Natural killer cell (primary cell): ENCODE measurements at regions of chr9 and their contacts with region 1.

Region 1: DNA sequence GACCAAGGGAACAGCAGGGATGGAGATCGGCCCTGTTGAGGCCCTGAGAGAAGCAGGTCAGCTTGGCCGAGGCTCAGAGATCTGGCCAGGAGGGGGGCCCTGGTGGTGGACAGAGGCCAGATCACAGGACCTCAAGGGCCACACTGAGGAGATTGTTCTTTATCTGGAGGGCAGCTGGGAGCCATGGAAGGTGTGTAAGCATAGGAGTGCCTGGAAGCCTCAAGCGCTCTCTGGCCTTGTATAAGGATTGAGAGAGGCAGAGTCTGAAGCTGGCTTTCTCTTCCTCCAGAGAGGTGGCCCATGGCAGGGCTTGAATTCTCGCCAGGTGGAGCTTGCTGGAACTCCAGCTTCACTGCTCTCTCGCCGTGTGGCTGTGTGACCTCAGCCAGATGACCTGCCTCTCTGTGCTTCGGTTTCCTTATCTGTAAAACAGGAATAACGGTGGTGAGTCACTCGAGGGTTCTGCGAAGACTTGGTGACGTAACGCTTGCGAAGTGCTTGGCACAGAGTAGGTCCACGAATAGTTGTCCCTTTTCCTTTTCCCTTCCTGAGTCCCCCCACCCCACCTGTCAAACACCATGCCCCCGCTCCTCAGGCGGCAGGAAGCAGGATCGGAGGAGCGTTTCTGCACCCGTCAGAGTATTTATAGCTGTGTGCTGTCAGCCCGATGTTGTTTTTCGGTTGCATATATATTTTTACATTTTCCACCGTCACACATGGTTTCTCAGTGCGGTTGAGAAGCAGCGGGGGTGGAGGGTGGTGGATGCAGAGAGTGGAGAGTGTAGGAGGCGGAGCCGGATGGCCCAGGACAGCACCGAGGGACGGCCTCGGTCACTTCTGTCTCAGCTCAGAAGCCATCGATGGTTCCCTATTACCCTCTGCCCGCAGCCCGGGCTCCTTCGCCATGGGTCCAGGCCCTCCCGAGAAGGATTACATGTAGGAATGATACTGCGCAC is 17.0 kb upstream of the CRB2 start:
- DNase-seq: peak; percentile 63 to 65
- ATAC-seq: peak; percentile 82 to 89 (median 85)
- H3K4me3 ChIP-seq: peak overlapping the region; percentile 29
- H3K4me3 Mint-ChIP-seq: peak overlapping the region; percentile 86
- H3K27ac ChIP-seq: peak overlapping the region; percentile 79
- H3K27ac Mint-ChIP-seq: peak overlapping the region; percentile 68 to 92
- H3K4me1 ChIP-seq: peaks cover 49% of the 10 kb centered on the region
- H3K4me1 Mint-ChIP-seq: peaks cover 27 to 30% of the 10 kb centered on the region in 2 donors
- H3K27me3 ChIP-seq: no peaks in the 10 kb centered on the region
- H3K27me3 Mint-ChIP-seq: peaks cover 6 to 13% of the 10 kb centered on the region in 2 donors
- CTCF ChIP-seq: no peak

Region 2: DNA sequence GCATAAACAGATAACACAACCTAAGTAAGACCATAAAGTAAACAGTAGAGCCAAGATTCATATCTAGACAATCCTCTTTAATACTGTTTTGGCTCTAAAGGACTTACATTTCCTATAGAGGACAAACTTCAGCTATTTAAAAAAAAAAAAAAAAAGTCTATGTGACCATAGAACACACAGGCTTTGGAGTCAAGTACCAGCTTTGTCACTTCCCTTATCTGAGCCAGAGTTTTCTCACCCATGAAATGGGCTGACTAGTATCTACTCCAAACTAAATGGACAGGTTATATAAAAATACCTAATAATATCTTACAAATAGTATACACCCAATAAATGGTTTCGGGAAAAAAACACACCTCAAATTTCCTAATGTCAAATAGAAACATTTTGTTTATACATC is 151.9 kb before region 1 on chr9:
- intact Hi-C with region 1: no loop called
- DNase-seq: no peak
- ATAC-seq: no peak
- H3K4me3 ChIP-seq: no peak overlapping the region
- H3K4me3 Mint-ChIP-seq: no peak overlapping the region
- H3K27ac ChIP-seq: no peak overlapping the region
- H3K27ac Mint-ChIP-seq: no peak overlapping the region
- H3K4me1 ChIP-seq: no peaks in the 10 kb centered on the region
- H3K4me1 Mint-ChIP-seq: no peaks in the 10 kb centered on the region
- H3K27me3 ChIP-seq: no peaks in the 10 kb centered on the region
- H3K27me3 Mint-ChIP-seq: no peaks in the 10 kb centered on the region
- CTCF ChIP-seq: no peak

Region 3: DNA sequence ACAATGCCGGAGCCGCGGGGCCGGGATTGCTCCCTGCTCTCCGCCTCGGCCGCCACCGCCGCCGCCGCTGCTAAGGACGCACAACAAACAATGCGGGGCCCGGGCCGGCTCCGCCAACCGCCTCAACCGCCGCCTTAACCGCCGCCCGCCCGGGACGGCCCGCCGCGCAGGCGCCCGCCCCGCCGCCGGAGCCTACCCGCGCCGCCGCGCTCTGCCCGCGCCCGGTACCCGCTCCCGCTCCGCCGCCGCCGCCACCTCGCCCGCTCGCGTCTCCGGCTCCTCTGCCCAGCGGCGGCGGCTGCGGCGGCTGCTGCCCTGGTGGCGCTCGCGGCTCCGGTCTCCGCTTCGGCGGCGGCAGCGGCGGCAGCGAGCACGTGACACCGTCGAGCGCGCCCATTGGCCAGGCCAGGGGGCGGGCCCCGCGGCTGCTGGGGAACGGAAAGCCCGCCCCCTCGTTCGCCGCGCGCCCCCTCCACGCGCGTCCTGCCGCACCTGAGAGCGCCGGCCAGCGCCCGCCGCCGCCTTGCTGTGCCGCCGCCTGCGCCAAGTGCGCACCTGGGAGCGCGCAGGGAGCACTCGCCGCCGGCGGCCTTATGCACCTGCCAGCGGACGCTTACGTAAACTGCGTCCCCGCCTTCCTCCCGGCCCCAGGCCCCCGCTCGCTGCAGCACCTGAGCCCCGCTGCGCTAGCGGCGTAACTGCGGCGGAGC is 70.6 kb before region 1 on chr9 and contains the start of gene STRBP:
- intact Hi-C with region 1: loop called (anchors 5 kb)
- DNase-seq: peak; percentile 92 to 96
- ATAC-seq: peak; percentile 92 to 95 (median 94)
- H3K4me3 ChIP-seq: peak within 1 kb of the TSS; percentile 56
- H3K4me3 Mint-ChIP-seq: peak within 1 kb of the TSS; percentile 73
- H3K27ac ChIP-seq: peak within 1 kb of the TSS; percentile 57
- H3K27ac Mint-ChIP-seq: peak within 1 kb of the TSS in 1 of 2 donors; percentile 78
- H3K4me1 ChIP-seq: peaks cover 18% of the 10 kb centered on the region
- H3K4me1 Mint-ChIP-seq: peaks cover 6 to 19% of the 10 kb centered on the region in 2 donors
- H3K27me3 ChIP-seq: no peaks in the 10 kb centered on the region
- H3K27me3 Mint-ChIP-seq: peaks cover 3 to 7% of the 10 kb centered on the region in 2 donors
- CTCF ChIP-seq: no peak
- total RNA-seq, gene STRBP: 6.0 to 8.3 (median 7.9) TPM

Region 4: DNA sequence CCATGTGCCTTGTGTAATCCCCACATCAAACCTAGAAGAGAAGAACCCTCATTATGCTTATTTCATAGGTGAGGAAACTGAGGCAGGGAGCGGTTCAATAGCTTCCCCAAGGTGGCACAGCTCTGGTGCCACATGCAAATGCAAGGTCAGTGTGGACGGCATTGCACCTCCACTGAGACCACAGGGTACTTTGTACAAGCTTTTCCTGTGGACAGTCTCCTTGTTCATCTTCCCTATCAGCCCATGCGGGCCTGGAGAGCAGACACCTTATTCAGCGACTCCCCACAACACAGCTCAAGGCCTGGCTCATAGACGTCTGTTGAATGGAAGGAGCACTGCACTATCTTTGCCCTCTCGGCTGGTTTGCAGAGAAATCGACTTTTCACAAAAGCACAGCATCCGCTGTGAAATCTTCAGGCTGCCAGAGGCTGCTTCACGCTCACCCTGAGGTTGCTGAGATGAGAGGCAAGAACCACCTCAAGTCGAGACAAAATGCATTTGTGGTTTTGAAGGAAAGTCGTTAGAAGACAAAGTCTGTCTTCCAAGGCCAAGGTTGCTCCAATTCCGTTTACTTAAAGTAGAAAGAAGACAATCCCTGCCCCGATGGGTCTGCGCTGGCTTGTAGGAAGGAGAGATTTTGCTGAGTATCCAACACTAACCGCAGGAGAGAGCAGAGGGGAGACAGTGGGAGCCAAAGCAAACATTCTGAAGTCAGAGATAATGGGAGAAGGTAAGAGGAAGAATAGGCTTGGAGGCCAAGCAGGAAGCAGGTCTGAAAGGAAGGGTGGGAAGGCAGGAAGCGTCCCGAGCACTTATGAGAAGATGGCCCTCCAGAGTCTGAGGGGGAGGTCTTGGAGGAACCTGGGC is 36.4 kb before region 1 on chr9:
- intact Hi-C with region 1: loop called (anchors 5 kb)
- DNase-seq: peak in 1 of 2 donors; percentile 52
- ATAC-seq: peak; percentile 16 to 54 (median 31)
- H3K4me3 ChIP-seq: no peak overlapping the region
- H3K4me3 Mint-ChIP-seq: peak overlapping the region; percentile 59
- H3K27ac ChIP-seq: no peak overlapping the region
- H3K27ac Mint-ChIP-seq: peak overlapping the region; percentile 10 to 23
- H3K4me1 ChIP-seq: peaks cover 44% of the 10 kb centered on the region
- H3K4me1 Mint-ChIP-seq: peaks cover 32 to 43% of the 10 kb centered on the region in 2 donors
- H3K27me3 ChIP-seq: peaks cover 2% of the 10 kb centered on the region
- H3K27me3 Mint-ChIP-seq: peaks cover 22 to 26% of the 10 kb centered on the region in 2 donors
- CTCF ChIP-seq: no peak

Region 5: DNA sequence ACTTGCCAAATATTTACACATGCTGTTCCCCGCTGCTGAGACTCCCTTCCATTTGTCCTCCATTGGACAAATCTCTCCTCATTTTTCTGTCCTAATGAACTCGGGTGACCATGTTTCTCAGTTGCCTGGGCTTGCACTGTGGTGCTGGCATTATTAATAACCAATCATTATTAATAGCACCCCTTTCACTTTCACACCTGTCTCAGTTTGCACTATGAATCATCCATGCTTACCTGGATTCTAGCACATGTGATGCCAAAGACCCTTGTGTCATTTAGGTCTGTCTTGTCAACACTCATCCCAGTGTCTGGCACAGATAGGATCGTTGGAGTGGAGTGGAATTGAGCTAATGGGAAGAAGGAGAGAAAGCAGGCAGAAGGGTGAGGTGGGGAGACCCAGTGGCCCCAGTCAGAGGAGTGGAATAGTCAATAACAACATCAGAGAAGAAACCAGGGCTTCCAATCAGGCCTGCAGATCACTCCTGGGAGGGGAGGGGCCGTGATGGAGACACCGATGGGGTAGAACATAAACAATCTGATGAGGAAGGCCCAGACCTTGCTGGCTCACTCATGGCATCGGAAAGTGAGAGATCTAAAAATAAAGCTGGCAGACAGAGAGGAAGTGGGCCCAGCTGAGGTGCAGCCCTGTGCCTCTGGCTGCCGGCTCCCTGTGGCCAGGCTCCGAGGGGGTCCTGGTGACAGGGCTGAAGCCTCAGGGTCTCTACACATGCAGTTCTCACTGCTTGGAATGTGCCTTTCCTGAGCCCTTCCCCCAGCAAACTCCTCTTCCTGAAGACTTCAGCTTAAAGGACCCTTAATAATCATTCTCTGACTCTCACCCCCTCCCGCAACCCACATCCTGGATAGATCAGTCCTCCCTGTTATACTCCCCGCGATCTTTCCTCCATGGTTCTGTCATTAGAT is 16.5 kb before region 1 on chr9:
- intact Hi-C with region 1: loop called (anchors 2 kb)
- DNase-seq: peak; percentile 55 to 82
- ATAC-seq: peak; percentile 80 to 89 (median 87)
- H3K4me3 ChIP-seq: no peak overlapping the region
- H3K4me3 Mint-ChIP-seq: peak overlapping the region; percentile 83
- H3K27ac ChIP-seq: peak overlapping the region; percentile 29
- H3K27ac Mint-ChIP-seq: peak overlapping the region; percentile 3 to 66
- H3K4me1 ChIP-seq: peaks cover 34% of the 10 kb centered on the region
- H3K4me1 Mint-ChIP-seq: peaks cover 14 to 34% of the 10 kb centered on the region in 2 donors
- H3K27me3 ChIP-seq: peaks cover 11% of the 10 kb centered on the region
- H3K27me3 Mint-ChIP-seq: peaks cover 62 to 65% of the 10 kb centered on the region in 2 donors
- CTCF ChIP-seq: no peak

Region 6: GRCh38 chr9:123642291-123643278 is 303.6 kb after region 1 on chr9:
- intact Hi-C with region 1: no loop called
- DNase-seq: no peak
- ATAC-seq: no peak
- H3K4me3 ChIP-seq: no peak overlapping the region
- H3K4me3 Mint-ChIP-seq: no peak overlapping the region
- H3K27ac ChIP-seq: no peak overlapping the region
- H3K27ac Mint-ChIP-seq: no peak overlapping the region
- H3K4me1 ChIP-seq: peaks cover 20% of the 10 kb centered on the region
- H3K4me1 Mint-ChIP-seq: peaks cover 29% of the 10 kb centered on the region in 2 donors
- H3K27me3 ChIP-seq: no peaks in the 10 kb centered on the region
- H3K27me3 Mint-ChIP-seq: peaks cover 0 to 20% of the 10 kb centered on the region in 2 donors
- CTCF ChIP-seq: no peak